Common myeloid progenitor, CD34-positive (primary cell): ENCODE measurements at regions of chr10 and their contacts with region 1.

Region 1: GRCh38 chr10:70493660-70494234 is 15.2 kb downstream of the PALD1 start:
- DNase-seq: peak in 2 of 3 donors; percentile 51 to 58
- H3K4me3 ChIP-seq: peak overlapping the region in 3 of 7 experiments; percentile 5 to 31 (median 26)
- H3K27ac ChIP-seq: no peak overlapping the region
- H3K4me1 ChIP-seq: peaks cover 16 to 75% (median 41%) of the 10 kb centered on the region in 4 experiments
- H3K27me3 ChIP-seq: no peaks in the 10 kb centered on the region

Region 2: DNA sequence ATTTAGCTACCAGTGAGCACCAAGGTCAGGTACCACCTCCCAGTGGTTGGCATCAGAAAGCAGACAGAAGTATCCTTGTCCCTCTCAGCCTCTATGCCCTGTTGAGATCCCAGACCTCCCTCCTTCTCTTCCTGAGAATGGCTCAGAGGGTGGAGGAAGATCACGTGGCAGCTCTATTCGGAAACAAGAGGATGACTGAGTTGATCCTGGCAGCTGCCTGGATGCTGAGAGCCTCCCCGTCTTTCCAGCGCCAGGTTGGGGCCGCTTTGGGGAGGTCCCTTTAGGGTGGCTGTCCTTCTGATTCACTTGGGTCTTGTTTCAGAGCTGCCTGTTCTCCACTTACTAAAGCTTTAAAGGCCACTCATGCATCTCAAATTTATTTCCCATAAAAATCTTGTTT is 173.0 kb before region 1 on chr10:
- CTCF ChIA-PET with region 1: no interaction called
- POLR2A ChIA-PET with region 1: no interaction called
- DNase-seq: no peak
- H3K4me3 ChIP-seq: no peak overlapping the region
- H3K27ac ChIP-seq: no peak overlapping the region
- H3K4me1 ChIP-seq: peaks cover 0 to 31% (median 23%) of the 10 kb centered on the region in 4 experiments
- H3K27me3 ChIP-seq: peaks cover 0 to 12% (median 0%) of the 10 kb centered on the region in 5 experiments

Region 3: GRCh38 chr10:70508912-70509756 is 15.4 kb after region 1 on chr10:
- CTCF ChIA-PET with region 1: interaction called, 28 read pairs
- POLR2A ChIA-PET with region 1: interaction called, 13 read pairs
- DNase-seq: peak; percentile 40 to 95 (median 89)
- H3K4me3 ChIP-seq: peak overlapping the region in 3 of 7 experiments; percentile 20 to 52 (median 51)
- H3K27ac ChIP-seq: no peak overlapping the region
- H3K4me1 ChIP-seq: peaks cover 4 to 47% (median 29%) of the 10 kb centered on the region in 4 experiments
- H3K27me3 ChIP-seq: no peaks in the 10 kb centered on the region

Region 4: DNA sequence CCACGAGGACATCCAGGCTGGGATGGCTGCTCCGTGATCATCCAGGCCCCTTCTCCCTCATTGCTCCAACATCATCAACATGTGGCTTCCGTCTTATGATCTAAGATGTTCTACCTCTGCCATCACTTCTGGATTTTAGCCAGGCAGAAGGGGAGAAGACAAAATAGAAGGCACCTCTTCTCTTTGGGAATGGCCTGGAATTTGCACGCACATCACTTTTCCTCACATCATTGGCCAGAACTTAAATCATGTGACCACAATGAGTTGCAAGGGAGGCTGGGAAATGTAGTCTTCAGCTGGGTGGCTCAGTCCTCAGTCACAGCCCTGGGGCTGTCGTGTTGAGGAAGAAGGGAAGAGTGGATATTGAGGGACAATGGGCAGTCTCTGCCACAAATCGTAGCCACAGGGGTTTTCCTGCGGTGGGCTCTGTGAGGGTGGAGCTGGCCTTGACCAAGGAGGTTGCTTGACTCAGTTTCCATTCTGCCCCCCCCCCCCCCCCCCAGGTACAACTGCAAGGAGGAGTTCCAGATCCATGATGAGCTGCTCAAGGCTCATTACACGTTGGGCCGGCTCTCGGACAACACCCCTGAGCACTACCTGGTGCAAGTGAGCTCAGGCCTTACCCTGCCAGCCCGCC is 35.1 kb after region 1 on chr10:
- CTCF ChIA-PET with region 1: interaction called, 16 read pairs
- POLR2A ChIA-PET with region 1: no interaction called
- DNase-seq: peak; percentile 30 to 54 (median 36)
- H3K4me3 ChIP-seq: no peak overlapping the region
- H3K27ac ChIP-seq: no peak overlapping the region
- H3K4me1 ChIP-seq: peaks cover 0 to 21% (median 10%) of the 10 kb centered on the region in 4 experiments
- H3K27me3 ChIP-seq: no peaks in the 10 kb centered on the region